ENCODE measurements at regions of chr1 and their contacts with region 1.

Region 1: DNA sequence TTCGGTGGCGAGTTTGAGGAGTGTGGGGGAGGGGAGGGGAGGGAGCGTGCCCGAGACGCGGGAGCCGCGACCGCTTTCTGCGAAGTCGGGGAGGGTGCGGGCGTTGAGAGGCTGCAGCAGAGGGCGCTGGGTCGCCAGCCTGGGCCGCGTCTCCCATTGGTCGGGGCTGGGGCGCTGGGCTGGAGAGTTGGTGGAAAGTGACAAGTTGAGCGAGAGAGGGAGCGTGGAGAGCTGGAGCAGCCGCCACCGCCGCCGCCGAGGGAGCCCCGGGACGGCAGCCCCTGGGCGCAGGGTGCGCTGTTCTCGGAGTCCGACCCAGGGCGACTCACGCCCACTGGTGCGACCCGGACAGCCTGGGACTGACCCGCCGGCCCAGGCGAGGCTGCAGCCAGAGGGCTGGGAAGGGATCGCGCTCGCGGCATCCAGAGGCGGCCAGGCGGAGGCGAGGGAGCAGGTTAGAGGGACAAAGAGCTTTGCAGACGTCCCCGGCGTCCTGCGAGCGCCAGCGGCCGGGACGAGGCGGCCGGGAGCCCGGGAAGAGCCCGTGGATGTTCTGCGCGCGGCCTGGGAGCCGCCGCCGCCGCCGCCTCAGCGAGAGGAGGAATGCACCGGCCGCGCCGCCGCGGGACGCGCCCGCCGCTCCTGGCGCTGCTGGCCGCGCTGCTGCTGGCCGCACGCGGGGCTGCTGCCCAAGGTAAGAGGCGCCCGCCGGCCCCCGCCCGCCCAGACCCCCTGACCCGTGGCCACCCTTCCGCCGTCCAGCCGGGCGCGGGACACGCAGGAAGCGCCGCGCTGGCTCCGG is at the start of gene ROR1:
- DNase-seq: peak; percentile 94
- H3K4me3 Mint-ChIP-seq: peak within 1 kb of the TSS; percentile 99
- H3K27ac Mint-ChIP-seq: peak within 1 kb of the TSS; percentile 79
- H3K4me1 Mint-ChIP-seq: peaks cover 58% of the 10 kb centered on the region
- H3K27me3 Mint-ChIP-seq: no peaks in the 10 kb centered on the region
- CTCF ChIP-seq: peak; percentile 81
- total RNA-seq, gene ROR1: 24.5 and 33.8 TPM in 2 replicates

Region 2: DNA sequence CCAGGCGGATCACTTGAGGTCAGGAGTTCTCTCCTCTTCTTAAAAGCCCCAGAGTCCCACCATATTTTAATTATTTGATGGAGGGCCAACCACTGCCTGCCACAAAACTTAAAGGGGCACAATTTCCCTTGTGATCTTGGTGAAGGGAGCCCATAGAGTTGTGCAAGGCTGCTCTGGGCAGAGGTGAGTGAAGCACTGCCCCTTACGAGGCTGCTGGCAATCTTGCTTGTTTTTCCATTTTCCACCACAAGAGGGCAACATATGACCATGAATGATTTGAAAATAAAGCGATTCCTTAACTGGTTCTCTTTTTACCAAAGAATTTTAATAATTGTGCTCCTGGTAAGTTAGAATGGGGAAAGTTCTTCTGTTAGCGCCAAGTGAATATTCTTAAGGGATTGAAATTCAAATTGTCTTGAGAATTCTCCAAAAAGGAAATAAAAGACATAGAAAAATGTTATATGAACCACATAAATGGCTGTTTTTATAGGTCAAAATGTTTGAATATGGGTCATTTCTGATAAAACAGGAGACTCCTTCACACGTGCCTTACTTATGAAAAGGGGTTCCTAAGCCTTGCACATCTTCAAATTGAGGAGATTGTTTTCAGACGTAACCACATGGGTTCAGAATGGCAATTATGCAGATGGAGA is 158.1 kb before region 1 on chr1:
- CTCF ChIA-PET with region 1: no interaction called
- intact Hi-C with region 1: loop called (anchors 5 kb)
- DNase-seq: peak; percentile 79
- H3K4me3 Mint-ChIP-seq: no peak overlapping the region
- H3K27ac Mint-ChIP-seq: no peak overlapping the region
- H3K4me1 Mint-ChIP-seq: peaks cover 49% of the 10 kb centered on the region
- H3K27me3 Mint-ChIP-seq: no peaks in the 10 kb centered on the region
- CTCF ChIP-seq: peak; percentile 87

Region 3: GRCh38 chr1:63713627-63714481 is 60.2 kb before region 1 on chr1:
- CTCF ChIA-PET with region 1: no interaction called
- intact Hi-C with region 1: no loop called
- DNase-seq: no peak
- H3K4me3 Mint-ChIP-seq: no peak overlapping the region
- H3K27ac Mint-ChIP-seq: no peak overlapping the region
- H3K4me1 Mint-ChIP-seq: peaks cover 6% of the 10 kb centered on the region
- H3K27me3 Mint-ChIP-seq: no peaks in the 10 kb centered on the region
- CTCF ChIP-seq: no peak

Region 4: DNA sequence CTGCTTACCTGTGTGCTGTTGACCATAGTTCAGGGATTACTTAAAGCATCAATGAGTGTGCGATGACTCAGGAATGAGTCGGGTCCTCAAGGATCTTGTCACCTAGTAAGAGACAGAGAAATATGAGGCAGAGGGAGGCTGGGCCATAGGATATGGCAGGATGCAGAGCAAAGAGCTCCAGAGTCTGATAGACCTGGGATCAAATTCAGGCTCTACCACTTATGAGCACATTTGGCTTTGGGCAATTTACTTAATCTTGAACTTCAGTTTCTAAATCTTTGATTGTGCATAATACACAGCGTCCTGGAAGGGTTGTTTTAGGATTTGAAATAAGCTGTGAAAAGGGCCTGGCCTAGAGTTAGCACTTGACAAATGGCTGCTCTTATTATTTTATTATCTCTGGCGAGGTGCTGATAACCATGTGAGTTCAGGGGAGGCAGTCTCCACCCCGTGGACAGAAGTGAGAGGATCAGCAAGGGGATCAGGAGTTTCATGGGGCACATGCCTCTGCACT is 94.3 kb after region 1 on chr1:
- CTCF ChIA-PET with region 1: interaction called, 3 read pairs
- intact Hi-C with region 1: loop called (anchors 2 kb)
- DNase-seq: no peak
- H3K4me3 Mint-ChIP-seq: no peak overlapping the region
- H3K27ac Mint-ChIP-seq: peak overlapping the region; percentile 55
- H3K4me1 Mint-ChIP-seq: peaks cover 66% of the 10 kb centered on the region
- H3K27me3 Mint-ChIP-seq: no peaks in the 10 kb centered on the region
- CTCF ChIP-seq: no peak

Region 5: GRCh38 chr1:64136752-64137411 is 362.9 kb after region 1 on chr1:
- CTCF ChIA-PET with region 1: interaction called, 6 read pairs
- intact Hi-C with region 1: loop called (anchors 5 kb)
- DNase-seq: peak; percentile 82
- H3K4me3 Mint-ChIP-seq: no peak overlapping the region
- H3K27ac Mint-ChIP-seq: no peak overlapping the region
- H3K4me1 Mint-ChIP-seq: peaks cover 20% of the 10 kb centered on the region
- H3K27me3 Mint-ChIP-seq: no peaks in the 10 kb centered on the region
- CTCF ChIP-seq: peak; percentile 86

Measured in Calu3 (cell line).